AG04449 (cell line): ENCODE measurements at regions of chr1 and their contacts with region 1.

Region 1: GRCh38 chr1:240455228-240455821 is 156.6 kb downstream of the GREM2 start:
- DNase-seq: no peak
- H3K4me3 ChIP-seq: no peak overlapping the region
- CTCF ChIP-seq: peak; percentile 23

Region 2: DNA sequence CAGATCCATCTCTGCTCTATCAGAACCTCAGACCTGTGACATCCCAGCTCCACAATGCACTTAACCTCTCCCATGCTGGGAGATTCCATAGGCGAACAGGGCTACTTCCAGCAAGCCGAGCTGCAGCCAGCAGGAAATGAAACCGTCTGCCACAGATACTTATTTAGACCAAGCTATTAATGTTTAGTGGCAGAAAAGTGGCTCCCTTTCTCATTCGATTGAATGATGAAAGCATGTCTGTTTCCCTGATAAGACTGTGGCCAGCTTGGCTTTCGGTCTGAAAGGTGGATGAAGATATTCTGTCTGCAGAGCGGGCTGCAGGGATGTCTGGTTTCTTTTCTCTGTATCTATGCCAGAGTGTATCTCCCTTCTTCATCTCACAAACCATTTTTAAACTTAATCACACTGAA is 10.2 kb after region 1 on chr1:
- CTCF ChIA-PET with region 1: interaction called, 13 read pairs
- POLR2A ChIA-PET with region 1: no interaction called
- DNase-seq: no peak
- H3K4me3 ChIP-seq: no peak overlapping the region
- CTCF ChIP-seq: no peak

Region 3: GRCh38 chr1:240602189-240602588 is 146.9 kb after region 1 on chr1:
- CTCF ChIA-PET with region 1: interaction called, 37 read pairs
- POLR2A ChIA-PET with region 1: no interaction called
- DNase-seq: no peak
- H3K4me3 ChIP-seq: no peak overlapping the region
- CTCF ChIP-seq: no peak

Region 4: DNA sequence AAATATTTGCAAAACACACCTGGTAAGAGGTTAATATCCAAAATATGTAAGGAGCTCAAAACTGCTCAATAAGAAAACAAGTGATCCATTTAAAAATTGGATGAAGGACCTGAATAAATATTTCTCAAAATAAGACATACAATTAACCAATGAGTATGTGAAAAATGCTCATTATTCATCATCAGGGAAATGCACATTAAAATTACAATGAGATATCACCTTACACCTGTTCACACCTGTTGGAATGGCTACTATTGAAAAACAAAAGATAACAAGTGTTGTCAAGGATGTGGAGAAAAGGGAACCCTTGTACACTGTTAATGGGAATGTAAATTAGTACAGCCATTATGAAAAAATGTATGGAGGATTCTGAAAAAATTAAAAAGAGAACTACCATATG is 292.6 kb after region 1 on chr1:
- CTCF ChIA-PET with region 1: no interaction called
- POLR2A ChIA-PET with region 1: no interaction called
- DNase-seq: no peak
- H3K4me3 ChIP-seq: no peak overlapping the region
- CTCF ChIP-seq: no peak